ENCODE measurements at regions of chr3 and their contacts with region 1.

Region 1: GRCh38 chr3:160676547-160677303 is at the start of gene ARL14:
- DNase-seq: no peak
- ATAC-seq: peak; percentile 35
- H3K4me3 ChIP-seq: no peak within 1 kb of the TSS
- H3K27ac ChIP-seq: no peak within 1 kb of the TSS
- H3K4me1 ChIP-seq: no peaks in the 10 kb centered on the region
- H3K27me3 ChIP-seq: no peaks in the 10 kb centered on the region
- CTCF ChIP-seq: no peak
- EP300 ChIP-seq: no peak
- POLR2A ChIP-seq: no peak
- RAD21 ChIP-seq: no peak
- polyA plus RNA-seq, gene ARL14: 0.18 TPM in 1 of 2 experiments, not detected in the other

Region 2: DNA sequence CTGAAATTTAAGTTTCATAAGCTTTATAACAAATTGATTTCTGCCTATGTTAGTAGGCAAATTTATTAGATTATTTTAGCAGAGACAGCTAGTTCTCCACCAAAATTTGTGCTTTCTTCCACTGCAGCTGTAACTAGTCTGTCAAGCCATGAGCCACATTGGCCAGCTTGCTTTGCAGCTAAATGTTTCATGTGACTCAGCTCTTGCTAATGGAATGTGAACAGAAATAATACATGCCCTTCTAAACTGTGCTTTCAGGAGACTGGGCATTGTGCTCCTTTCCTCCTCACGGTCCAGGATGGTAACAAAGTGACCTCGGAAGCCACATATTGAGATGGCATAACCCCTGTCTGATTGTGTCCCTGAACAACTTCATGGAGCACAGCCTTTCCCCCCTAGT is 60.0 kb before region 1 on chr3:
- CTCF ChIA-PET with region 1: no interaction called
- POLR2A ChIA-PET with region 1: no interaction called
- RAD21 ChIA-PET with region 1: no interaction called
- SMC1A ChIA-PET with region 1: no interaction called
- in situ Hi-C with region 1: no loop called
- intact Hi-C with region 1: no loop called
- DNase-seq: no peak
- ATAC-seq: no peak
- H3K4me3 ChIP-seq: no peak overlapping the region
- H3K27ac ChIP-seq: no peak overlapping the region
- H3K4me1 ChIP-seq: no peaks in the 10 kb centered on the region
- H3K27me3 ChIP-seq: no peaks in the 10 kb centered on the region
- CTCF ChIP-seq: no peak
- EP300 ChIP-seq: no peak
- POLR2A ChIP-seq: no peak
- RAD21 ChIP-seq: no peak

Region 3: DNA sequence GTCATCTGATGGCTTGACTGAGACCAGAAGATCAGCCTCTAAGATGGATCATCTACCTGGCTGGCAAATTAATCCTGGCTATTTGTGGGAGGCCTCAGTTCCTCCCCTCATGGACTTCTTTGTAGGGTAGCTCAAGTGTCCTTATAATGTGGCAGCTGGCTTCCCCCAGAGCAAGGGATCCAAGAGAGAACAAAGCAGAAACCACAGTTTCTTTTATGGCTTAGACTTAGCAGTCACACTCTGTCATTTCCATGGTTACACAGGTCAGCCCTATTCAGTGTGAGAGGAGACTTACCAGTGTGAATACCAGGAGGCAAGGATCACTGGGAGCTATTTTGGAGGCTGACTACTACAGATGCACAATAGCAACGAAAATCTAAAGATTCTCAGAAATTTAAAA is 15.1 kb before region 1 on chr3:
- CTCF ChIA-PET with region 1: no interaction called
- POLR2A ChIA-PET with region 1: no interaction called
- RAD21 ChIA-PET with region 1: interaction called, 4 read pairs
- SMC1A ChIA-PET with region 1: interaction called, 11 read pairs
- in situ Hi-C with region 1: no loop called
- intact Hi-C with region 1: no loop called
- DNase-seq: no peak
- ATAC-seq: peak; percentile 65
- H3K4me3 ChIP-seq: no peak overlapping the region
- H3K27ac ChIP-seq: no peak overlapping the region
- H3K4me1 ChIP-seq: peaks cover 3% of the 10 kb centered on the region; the same call in 1 of the 2 replicates
- H3K27me3 ChIP-seq: no peaks in the 10 kb centered on the region
- CTCF ChIP-seq: no peak
- EP300 ChIP-seq: no peak
- POLR2A ChIP-seq: no peak
- RAD21 ChIP-seq: no peak

Region 4: GRCh38 chr3:160720123-160720746 is 43.5 kb after region 1 on chr3:
- CTCF ChIA-PET with region 1: no interaction called
- POLR2A ChIA-PET with region 1: no interaction called
- RAD21 ChIA-PET with region 1: no interaction called
- SMC1A ChIA-PET with region 1: no interaction called
- in situ Hi-C with region 1: no loop called
- intact Hi-C with region 1: no loop called
- DNase-seq: no peak
- ATAC-seq: peak; percentile 83
- H3K4me3 ChIP-seq: no peak overlapping the region
- H3K27ac ChIP-seq: no peak overlapping the region
- H3K4me1 ChIP-seq: no peaks in the 10 kb centered on the region
- H3K27me3 ChIP-seq: no peaks in the 10 kb centered on the region; a peak in 1 of 4 replicates
- CTCF ChIP-seq: peak; percentile 30 to 35 (median 33); a peak in 4 of 6 replicates
- EP300 ChIP-seq: no peak
- POLR2A ChIP-seq: no peak
- RAD21 ChIP-seq: peak; percentile 31; the same call in 1 of the 2 replicates

Measured in GM12878 (cell line).